ENCODE measurements at regions of chr17 and their contacts with region 1.

Region 1: GRCh38 chr17:11240041-11240801 is 792 bp upstream of the SHISA6 start:
- DNase-seq: peak; percentile 68
- ATAC-seq: peak; percentile 85

Region 2: GRCh38 chr17:11170881-11171280 is 69.3 kb before region 1 on chr17:
- intact Hi-C with region 1: no loop called
- DNase-seq: no peak
- ATAC-seq: no peak

Region 3: GRCh38 chr17:11768106-11768505 is 527.9 kb after region 1 on chr17:
- intact Hi-C with region 1: loop called (anchors 5 kb)
- DNase-seq: no peak
- ATAC-seq: no peak

Region 4: GRCh38 chr17:12277827-12278226 is 1037.6 kb after region 1 on chr17:
- intact Hi-C with region 1: loop called (anchors 5 kb)
- DNase-seq: no peak
- ATAC-seq: no peak